ENCODE measurements at regions of chr3 and their contacts with region 1.

Region 1: GRCh38 chr3:50611464-50612233 is at the start of gene CISH:
- DNase-seq: peak; percentile 99
- ATAC-seq: peak; percentile 72
- H3K4me3 Mint-ChIP-seq: peak within 1 kb of the TSS; percentile 89
- H3K27ac Mint-ChIP-seq: peak within 1 kb of the TSS; percentile 100
- H3K4me1 Mint-ChIP-seq: peaks cover 29% of the 10 kb centered on the region
- H3K27me3 Mint-ChIP-seq: no peaks in the 10 kb centered on the region
- total RNA-seq, gene CISH: 266 to 369 TPM

Region 2: DNA sequence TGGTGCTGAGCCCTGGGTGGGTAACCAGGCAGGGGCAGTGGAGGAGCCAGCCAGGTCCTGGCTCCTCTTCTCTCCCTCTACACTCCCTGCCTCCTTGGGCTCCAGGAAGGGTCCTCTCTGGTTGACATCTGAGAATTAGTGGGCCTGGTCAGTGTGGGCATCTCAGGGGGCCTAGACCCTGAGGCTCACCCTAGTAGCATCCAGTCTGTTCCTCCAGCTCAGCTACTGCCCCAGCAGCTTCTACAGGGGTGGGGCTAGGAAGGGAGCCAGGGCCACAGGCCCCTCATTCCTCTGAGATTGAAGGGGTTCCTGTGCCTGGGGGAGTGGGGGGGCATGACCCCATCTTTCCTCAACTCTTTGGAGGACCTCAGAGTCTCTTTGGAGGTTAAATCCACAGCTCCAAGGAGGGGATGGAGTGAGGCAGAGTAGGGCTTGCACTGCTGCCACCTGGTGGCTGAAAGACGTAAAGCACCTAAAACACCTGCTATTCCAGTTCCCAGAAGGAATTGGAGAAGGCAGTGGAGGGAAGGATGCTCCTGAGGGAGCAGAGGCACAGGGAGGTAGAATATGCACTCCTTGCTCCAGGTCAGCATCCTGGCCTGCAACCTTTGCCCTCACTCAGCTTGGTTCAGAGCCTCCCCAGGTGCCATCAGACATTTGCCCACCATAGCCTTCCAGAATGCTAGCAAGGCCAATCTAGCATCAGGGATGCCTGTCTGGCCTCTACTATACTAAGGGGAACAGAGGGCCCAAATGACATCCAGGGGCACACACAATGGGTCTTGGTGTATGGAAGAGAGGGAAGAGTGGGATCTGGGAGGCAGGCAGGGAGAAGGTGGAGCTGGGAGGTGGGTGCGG is 69.2 kb before region 1 on chr3:
- CTCF ChIA-PET with region 1: interaction called, 12 read pairs
- DNase-seq: peak; percentile 64
- ATAC-seq: peak; percentile 74
- H3K4me3 Mint-ChIP-seq: no peak overlapping the region
- H3K27ac Mint-ChIP-seq: no peak overlapping the region
- H3K4me1 Mint-ChIP-seq: no peaks in the 10 kb centered on the region
- H3K27me3 Mint-ChIP-seq: peaks cover 21% of the 10 kb centered on the region

Region 3: DNA sequence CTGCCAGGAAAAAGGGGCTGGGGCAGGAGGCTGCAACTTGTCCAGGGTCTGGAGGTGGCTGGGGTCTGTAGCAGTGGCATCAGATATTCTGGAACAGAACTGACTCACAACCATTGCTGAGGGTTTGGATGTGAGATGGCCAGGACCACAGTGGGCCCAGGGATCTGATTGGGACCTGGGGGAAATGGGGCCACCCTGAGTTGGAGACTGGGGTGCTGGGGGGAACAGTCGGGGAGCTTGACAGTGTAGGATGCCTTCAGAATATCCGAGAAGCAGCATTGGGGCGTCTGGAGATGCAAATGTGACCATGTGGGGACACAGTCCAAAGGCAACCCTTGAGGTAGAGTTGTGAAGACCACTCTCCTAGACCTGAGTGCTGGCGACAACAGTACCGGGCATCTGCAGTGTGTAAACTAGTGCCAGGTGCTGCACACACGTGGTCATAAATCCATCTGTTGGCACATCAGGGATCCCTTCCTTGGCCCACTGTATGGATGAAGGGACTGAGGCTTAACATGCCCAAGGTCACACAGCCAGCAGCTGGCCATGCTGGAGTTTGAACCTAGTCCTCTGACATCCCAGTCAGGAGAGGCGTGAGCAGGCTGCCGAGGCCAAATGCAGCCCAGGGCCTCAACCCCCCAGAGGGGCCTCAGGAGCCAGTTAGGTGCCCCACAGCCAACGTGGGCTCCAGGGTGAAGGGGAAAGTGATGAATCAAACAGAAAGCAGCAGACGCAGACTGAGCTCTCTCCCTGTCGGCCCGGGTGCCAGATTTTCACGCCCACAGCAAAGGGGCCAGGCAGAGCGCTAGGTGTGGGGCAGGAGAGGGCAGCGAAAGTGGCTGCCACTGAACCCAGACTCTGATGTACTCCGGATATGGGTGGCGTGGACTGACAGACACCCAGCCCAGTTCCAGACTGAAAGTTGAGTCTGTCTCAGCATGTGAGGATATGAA is 23.6 kb before region 1 on chr3:
- CTCF ChIA-PET with region 1: interaction called, 242 read pairs
- DNase-seq: peak; percentile 90
- ATAC-seq: peak; percentile 41
- H3K4me3 Mint-ChIP-seq: peak overlapping the region; percentile 48
- H3K27ac Mint-ChIP-seq: peak overlapping the region; percentile 98
- H3K4me1 Mint-ChIP-seq: peaks cover 80% of the 10 kb centered on the region
- H3K27me3 Mint-ChIP-seq: no peaks in the 10 kb centered on the region

Region 4: DNA sequence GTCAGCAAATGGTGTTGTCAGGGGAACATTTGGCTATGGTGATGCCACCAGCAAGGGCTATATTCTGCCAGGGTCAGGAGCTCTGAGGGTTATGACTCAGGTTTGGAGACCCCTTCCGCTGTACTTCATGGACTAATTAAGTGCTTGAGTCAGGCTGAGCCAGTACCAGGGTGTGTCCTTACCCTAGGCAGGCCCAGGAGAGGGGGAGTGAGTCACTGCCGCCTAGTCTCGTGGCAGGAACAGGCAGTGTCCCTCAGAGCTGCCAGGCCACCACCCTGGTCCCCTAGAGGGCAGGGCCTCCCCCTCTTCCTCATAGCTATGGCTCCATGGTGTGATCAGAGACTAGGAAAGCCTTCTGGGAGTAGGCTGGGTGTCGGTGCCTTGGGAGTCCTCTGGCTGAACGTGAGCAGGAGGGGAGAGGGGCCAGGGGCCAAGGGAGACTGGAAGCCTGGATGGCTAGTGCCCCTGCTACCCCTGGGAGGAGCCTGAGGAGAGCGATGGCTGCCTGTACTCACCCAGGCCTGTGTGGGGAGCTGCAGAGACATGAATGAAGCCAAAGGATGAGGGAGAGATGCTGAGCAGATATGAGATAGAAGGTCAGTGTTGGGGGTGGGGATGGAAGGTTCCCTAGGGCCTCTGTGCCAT is 15.9 kb after region 1 on chr3:
- CTCF ChIA-PET with region 1: interaction called, 16 read pairs
- DNase-seq: no peak
- ATAC-seq: peak; percentile 25
- H3K4me3 Mint-ChIP-seq: no peak overlapping the region
- H3K27ac Mint-ChIP-seq: no peak overlapping the region
- H3K4me1 Mint-ChIP-seq: peaks cover 91% of the 10 kb centered on the region
- H3K27me3 Mint-ChIP-seq: no peaks in the 10 kb centered on the region

Region 5: GRCh38 chr3:50759015-50759414 is 147.4 kb after region 1 on chr3:
- CTCF ChIA-PET with region 1: no interaction called
- DNase-seq: no peak
- ATAC-seq: no peak
- H3K4me3 Mint-ChIP-seq: no peak overlapping the region
- H3K27ac Mint-ChIP-seq: no peak overlapping the region
- H3K4me1 Mint-ChIP-seq: no peaks in the 10 kb centered on the region
- H3K27me3 Mint-ChIP-seq: no peaks in the 10 kb centered on the region

Region 6: GRCh38 chr3:51371943-51372557 is 760.4 kb after region 1 on chr3:
- CTCF ChIA-PET with region 1: interaction called, 10 read pairs
- DNase-seq: peak; percentile 68
- ATAC-seq: peak; percentile 66
- H3K4me3 Mint-ChIP-seq: no peak overlapping the region
- H3K27ac Mint-ChIP-seq: no peak overlapping the region
- H3K4me1 Mint-ChIP-seq: no peaks in the 10 kb centered on the region
- H3K27me3 Mint-ChIP-seq: no peaks in the 10 kb centered on the region

Region 7: DNA sequence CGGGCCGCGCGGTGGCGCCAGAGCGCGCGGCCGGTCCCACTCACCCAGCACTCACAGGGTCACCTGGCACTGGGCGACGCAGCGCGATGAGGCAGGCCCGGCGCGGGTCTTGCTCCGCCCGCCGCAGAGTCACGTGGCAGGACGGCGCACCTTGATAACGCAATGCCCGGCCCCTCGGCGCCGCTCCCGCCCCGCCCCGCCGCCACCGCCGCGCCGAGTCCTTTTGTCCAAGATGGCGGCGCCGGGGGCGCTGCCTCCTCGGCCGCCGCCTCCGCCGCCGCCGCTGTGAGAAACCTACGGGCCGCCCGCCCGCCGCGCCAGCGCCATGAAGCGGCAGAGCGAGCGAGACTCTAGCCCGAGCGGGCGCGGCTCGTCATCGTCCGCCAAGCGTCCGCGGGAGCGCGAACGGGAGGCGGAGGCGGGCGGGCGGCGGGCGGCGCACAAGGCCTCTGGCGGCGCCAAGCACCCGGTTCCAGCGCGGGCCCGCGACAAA is 779.5 kb after region 1 on chr3 and contains the start of gene RBM15B:
- CTCF ChIA-PET with region 1: interaction called, 22 read pairs
- DNase-seq: peak; percentile 98
- ATAC-seq: peak; percentile 93
- H3K4me3 Mint-ChIP-seq: peak within 1 kb of the TSS; percentile 85
- H3K27ac Mint-ChIP-seq: peak within 1 kb of the TSS; percentile 88
- H3K4me1 Mint-ChIP-seq: peaks cover 82% of the 10 kb centered on the region
- H3K27me3 Mint-ChIP-seq: no peaks in the 10 kb centered on the region
- total RNA-seq, gene RBM15B: 28.7 to 36.1 TPM

Measured in activated CD8-positive, alpha-beta memory T cell treated with anti-CD3 and anti-CD28 coated beads, Interleukin-2, amount 10 ng/mL, durations not matched to agents 7 days and 5 days (primary cell).